Left ventricle myocardium superior (tissue), 1 donor: ENCODE measurements at regions of chr5 and their contacts with region 1.

Region 1: DNA sequence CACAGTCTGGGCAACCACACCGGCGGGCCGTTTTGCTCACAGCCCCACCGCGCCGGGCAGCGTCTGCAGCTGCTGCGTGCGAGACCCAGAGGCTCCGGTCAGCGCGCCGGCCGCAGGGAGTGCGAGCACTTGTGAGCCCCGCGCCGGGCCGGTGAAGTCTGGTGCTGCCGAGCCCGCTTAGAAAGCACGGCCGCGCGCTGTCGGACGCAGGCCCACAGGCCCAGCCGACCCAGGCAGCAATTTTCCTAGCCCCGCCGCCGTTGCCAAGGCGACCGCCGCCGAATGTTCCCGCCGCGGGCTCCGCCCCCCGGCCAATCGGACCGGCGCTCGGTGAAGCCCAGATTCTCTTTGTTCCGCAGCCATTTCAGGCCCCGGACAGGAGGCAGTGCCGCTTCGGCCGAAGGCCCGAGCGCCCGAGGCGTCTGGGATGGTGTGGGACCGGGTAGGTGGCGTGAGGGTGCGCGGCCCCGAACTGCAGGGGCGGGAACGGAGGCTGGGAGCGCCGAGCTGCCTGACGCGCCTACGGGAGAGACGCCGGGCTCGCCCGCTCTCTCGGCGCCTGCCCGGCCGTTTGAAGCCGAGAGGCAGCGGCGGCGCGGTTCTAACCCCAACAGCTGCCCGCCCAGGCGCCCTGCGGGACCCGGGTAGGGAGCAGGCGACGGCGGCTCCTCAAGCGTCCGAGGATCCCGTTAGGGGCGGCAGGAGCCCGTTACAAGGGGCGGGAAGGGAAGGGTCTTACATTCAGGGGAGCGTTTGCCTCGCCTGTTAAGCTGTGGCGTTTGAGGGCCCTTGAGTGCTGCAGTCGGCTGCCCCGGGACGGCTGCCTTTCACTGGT is at the start of gene TNPO1:
- DNase-seq: peak; percentile 97
- ATAC-seq: peak; percentile 94
- total RNA-seq, gene TNPO1: 67.7 TPM

Region 2: GRCh38 chr5:72597456-72597948 is 219.0 kb before region 1 on chr5:
- intact Hi-C with region 1: no loop called
- DNase-seq: no peak
- ATAC-seq: peak; percentile 77

Region 3: DNA sequence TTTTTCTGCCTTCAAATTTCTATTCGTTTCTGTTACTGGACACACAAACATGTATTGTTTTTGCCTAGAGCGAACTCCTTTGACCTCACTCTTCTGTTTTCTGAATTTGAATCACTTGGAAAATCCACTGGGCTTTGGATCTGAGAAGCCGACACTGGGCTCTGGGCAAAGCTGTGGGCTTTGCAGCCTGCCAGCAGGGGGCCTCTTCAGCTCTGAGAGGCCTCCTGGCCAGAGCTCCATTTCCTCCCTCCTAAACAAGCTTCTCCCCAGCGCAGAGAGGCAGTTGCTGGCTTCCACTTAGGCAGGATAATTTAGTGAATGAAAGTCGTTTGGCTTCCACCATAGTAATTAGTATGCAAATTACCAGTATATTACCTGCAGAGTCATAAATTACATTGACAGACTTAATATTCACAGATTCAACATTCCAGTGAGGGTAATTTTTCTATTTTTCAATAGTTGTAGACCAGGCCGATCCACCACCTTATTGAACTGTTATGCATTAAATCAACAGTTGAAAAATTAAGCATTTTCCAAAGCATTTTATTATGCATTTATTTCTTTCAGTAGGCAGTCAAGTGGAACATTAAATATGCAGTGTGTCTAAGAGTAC is 205.3 kb before region 1 on chr5:
- intact Hi-C with region 1: loop called (anchors 5 kb)
- DNase-seq: peak; percentile 86
- ATAC-seq: peak; percentile 99

Region 4: GRCh38 chr5:72752909-72753308 is 63.6 kb before region 1 on chr5:
- intact Hi-C with region 1: no loop called
- DNase-seq: no peak
- ATAC-seq: no peak